Naive thymus-derived CD4-positive, alpha-beta T cell (primary cell): ENCODE measurements at regions of chr12 and their contacts with region 1.

Region 1: GRCh38 chr12:49567611-49568441 is at the start of gene MCRS1:
- DNase-seq: peak; percentile 89 to 94 (median 91)
- ATAC-seq: peak; percentile 92
- H3K4me3 ChIP-seq: peak within 1 kb of the TSS; percentile 81
- H3K4me3 Mint-ChIP-seq: peak within 1 kb of the TSS; percentile 94 to 100 (median 99)
- H3K27ac ChIP-seq: peak within 1 kb of the TSS; percentile 91
- H3K27ac Mint-ChIP-seq: peak within 1 kb of the TSS; percentile 98 to 100 (median 99)
- H3K4me1 ChIP-seq: peaks cover 33 to 42% of the 10 kb centered on the region in 2 donors
- H3K4me1 Mint-ChIP-seq: peaks cover 45 to 76% (median 61%) of the 10 kb centered on the region in 7 donors
- H3K27me3 ChIP-seq: no peaks in the 10 kb centered on the region
- H3K27me3 Mint-ChIP-seq: peaks cover 0 to 3% (median 0%) of the 10 kb centered on the region in 5 donors
- total RNA-seq, gene MCRS1: 70.0 to 85.2 (median 71.4) TPM

Region 2: DNA sequence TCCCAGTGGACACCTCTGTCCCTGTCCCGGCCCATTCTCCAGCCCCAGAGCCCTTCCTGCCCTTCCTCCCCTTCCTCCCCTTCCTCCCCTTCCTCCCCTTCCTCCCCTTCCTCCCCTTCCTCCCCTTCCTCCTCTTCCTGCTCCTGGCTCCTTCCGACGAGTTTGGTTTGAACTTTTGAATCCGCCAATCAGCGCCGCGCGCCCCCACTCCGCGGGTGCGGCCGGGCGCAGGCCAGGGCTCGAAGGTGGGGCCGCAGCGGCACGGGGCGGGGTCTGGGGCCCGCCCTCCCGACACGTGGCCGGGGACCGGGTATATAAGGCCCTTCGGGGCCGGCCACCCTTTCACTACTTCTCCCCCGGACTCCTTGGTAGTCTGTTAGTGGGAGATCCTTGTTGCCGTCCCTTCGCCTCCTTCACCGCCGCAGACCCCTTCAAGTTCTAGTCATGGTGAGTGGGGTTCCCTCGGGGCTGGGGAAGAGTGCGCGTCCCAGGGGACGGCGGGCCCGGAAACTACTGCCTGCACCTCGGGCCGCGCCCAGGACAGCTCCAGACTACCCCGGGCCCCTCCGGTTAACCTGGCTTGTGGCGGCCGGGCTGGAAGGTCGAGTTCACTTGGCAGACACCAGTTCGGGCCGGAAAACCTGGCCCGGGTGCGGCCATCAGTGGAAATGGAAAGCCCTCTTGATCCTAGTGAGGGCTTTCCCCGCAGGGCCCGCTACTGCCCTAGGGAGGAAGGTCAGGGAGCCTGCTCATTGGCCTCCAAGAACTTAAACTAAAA is 302.9 kb before region 1 on chr12 and contains the start of gene TUBA1C:
- CTCF ChIA-PET with region 1: no interaction called
- POLR2A ChIA-PET with region 1: no interaction called
- intact Hi-C with region 1: loop called (anchors 1 to 2 kb)
- DNase-seq: peak; percentile 67 to 98 (median 72)
- ATAC-seq: peak; percentile 93
- H3K4me3 ChIP-seq: peak within 1 kb of the TSS; percentile 91
- H3K4me3 Mint-ChIP-seq: peak within 1 kb of the TSS; percentile 88 to 99 (median 92)
- H3K27ac ChIP-seq: peak within 1 kb of the TSS; percentile 68
- H3K27ac Mint-ChIP-seq: peak within 1 kb of the TSS; percentile 65 to 99 (median 89)
- H3K4me1 ChIP-seq: peaks cover 16% of the 10 kb centered on the region in 2 donors
- H3K4me1 Mint-ChIP-seq: peaks cover 4 to 51% (median 11%) of the 10 kb centered on the region in 7 donors
- H3K27me3 ChIP-seq: no peaks in the 10 kb centered on the region
- H3K27me3 Mint-ChIP-seq: peaks cover 0 to 2% (median 0%) of the 10 kb centered on the region in 5 donors
- total RNA-seq, gene TUBA1C: 17.9 to 195 (median 24.1) TPM

Region 3: DNA sequence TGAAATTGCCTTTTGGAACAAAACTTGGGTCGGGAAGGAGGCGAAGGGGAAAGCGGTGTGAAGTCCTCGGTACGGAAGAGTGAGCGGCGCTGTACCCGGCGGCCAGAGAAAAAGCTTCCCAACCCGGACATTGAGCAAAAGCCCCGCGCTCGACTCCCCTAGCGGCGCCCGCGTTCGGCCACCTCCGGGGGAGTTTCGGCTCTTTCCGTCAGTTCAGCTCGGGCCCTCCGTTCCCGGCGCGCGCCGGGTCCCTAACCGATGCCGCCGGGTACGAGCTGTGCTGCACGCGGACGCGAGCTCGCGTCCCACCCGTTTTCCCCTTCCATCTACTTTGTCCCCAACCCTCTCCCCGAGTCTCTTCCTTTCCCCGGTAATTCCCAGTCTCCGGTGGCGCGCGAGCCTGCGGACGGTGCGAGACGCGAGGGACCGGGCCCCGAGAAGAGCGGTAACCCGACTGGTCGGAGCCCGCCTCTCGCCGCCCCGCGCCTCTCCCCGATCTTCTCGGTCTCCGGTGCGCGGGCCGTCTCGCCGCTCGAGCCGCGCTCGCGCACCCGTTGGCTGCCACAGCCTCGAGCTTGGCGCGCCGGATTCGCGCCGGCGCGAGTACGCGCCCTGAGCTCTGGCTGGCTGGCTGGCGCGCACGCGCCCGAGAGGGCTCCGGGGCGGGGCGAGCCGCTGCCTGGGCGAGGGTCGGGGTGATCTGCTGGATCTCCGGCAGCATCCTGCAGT is 201.0 kb before region 1 on chr12:
- CTCF ChIA-PET with region 1: no interaction called
- POLR2A ChIA-PET with region 1: interaction called, 5 read pairs
- intact Hi-C with region 1: loop called (anchors 1 to 5 kb)
- DNase-seq: peak; percentile 72 to 95 (median 82)
- ATAC-seq: peak; percentile 90
- H3K4me3 ChIP-seq: peak overlapping the region; percentile 90
- H3K4me3 Mint-ChIP-seq: peak overlapping the region; percentile 71 to 97 (median 88)
- H3K27ac ChIP-seq: peak overlapping the region; percentile 87
- H3K27ac Mint-ChIP-seq: peak overlapping the region; percentile 65 to 97 (median 94)
- H3K4me1 ChIP-seq: peaks cover 0 to 15% of the 10 kb centered on the region in 2 donors
- H3K4me1 Mint-ChIP-seq: peaks cover 11 to 39% (median 31%) of the 10 kb centered on the region in 7 donors
- H3K27me3 ChIP-seq: no peaks in the 10 kb centered on the region
- H3K27me3 Mint-ChIP-seq: peaks cover 0 to 2% (median 0%) of the 10 kb centered on the region in 5 donors

Region 4: GRCh38 chr12:49538510-49539403 is 29.1 kb before region 1 on chr12 and contains the start of gene KCNH3:
- CTCF ChIA-PET with region 1: interaction called, 5 read pairs
- POLR2A ChIA-PET with region 1: interaction called, 4 read pairs
- intact Hi-C with region 1: loop called (anchors 1 to 2 kb)
- DNase-seq: peak; percentile 66 to 95 (median 86)
- ATAC-seq: peak; percentile 94
- H3K4me3 ChIP-seq: peak within 1 kb of the TSS; percentile 69
- H3K4me3 Mint-ChIP-seq: peak within 1 kb of the TSS; percentile 66 to 87 (median 80)
- H3K27ac ChIP-seq: peak within 1 kb of the TSS; percentile 11
- H3K27ac Mint-ChIP-seq: peak within 1 kb of the TSS in 6 of 9 donors; percentile 43 to 81 (median 64)
- H3K4me1 ChIP-seq: peaks cover 14 to 15% of the 10 kb centered on the region in 2 donors
- H3K4me1 Mint-ChIP-seq: peaks cover 13 to 37% (median 27%) of the 10 kb centered on the region in 7 donors
- H3K27me3 ChIP-seq: no peaks in the 10 kb centered on the region
- H3K27me3 Mint-ChIP-seq: peaks cover 0 to 66% (median 6%) of the 10 kb centered on the region in 5 donors
- total RNA-seq, gene KCNH3: 0.99 to 5.3 (median 3.8) TPM

Region 5: GRCh38 chr12:49828133-49829091 is 260.6 kb after region 1 on chr12 and contains the start of gene NCKAP5L:
- CTCF ChIA-PET with region 1: no interaction called
- POLR2A ChIA-PET with region 1: no interaction called
- intact Hi-C with region 1: loop called in 1 of 2 experiments (anchors 1 kb)
- DNase-seq: peak; percentile 86 to 94 (median 93)
- ATAC-seq: peak; percentile 96
- H3K4me3 ChIP-seq: peak within 1 kb of the TSS; percentile 82
- H3K4me3 Mint-ChIP-seq: peak within 1 kb of the TSS; percentile 88 to 99 (median 96)
- H3K27ac ChIP-seq: peak within 1 kb of the TSS; percentile 79
- H3K27ac Mint-ChIP-seq: peak within 1 kb of the TSS; percentile 89 to 99 (median 95)
- H3K4me1 ChIP-seq: peaks cover 8 to 16% of the 10 kb centered on the region in 2 donors
- H3K4me1 Mint-ChIP-seq: peaks cover 7 to 42% (median 30%) of the 10 kb centered on the region in 7 donors
- H3K27me3 ChIP-seq: no peaks in the 10 kb centered on the region
- H3K27me3 Mint-ChIP-seq: peaks cover 0 to 13% (median 0%) of the 10 kb centered on the region in 5 donors
- total RNA-seq, gene NCKAP5L: 4.3 to 27.5 (median 12.0) TPM